AG04449 (cell line): ENCODE measurements at regions of chr17 and their contacts with region 1.

Region 1: DNA sequence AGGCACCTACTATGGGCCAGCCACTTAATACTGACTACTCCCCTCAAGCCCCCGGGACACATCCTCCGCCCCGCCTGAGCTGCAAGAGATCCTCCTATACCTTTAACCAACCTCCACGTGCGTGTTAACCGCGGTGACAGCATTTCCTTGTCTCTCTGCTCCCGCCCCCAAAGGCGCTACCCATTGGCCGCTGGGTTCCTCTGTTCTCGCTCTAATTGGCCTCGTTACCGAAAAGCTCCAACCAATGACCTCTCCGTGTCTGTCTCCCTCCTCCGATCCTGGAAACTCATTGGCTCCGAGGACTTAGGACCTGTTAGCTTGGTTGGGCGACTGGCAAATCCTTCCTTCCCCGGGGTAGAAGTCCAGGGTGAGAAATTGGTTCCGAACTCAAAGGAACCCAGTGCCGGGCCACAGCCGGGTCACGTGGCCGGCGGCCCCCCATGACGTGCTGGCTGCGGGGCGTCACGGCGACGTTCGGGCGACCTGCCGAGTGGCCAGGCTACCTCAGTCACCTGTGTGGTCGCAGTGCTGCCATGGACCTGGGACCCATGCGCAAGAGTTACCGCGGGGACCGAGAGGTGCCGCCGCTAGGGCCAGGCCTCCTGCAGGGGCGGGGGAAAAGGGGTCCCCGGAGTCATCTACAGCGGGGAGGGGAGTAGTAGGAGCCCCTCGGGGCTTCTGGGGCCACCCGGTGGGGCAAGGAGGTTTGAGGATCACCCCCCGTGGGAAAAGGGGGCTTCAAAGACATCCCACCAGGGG is at the start of gene PNPO:
- DNase-seq: peak; percentile 86
- H3K4me3 ChIP-seq: peak within 1 kb of the TSS; percentile 78
- CTCF ChIP-seq: peak; percentile 10

Region 2: DNA sequence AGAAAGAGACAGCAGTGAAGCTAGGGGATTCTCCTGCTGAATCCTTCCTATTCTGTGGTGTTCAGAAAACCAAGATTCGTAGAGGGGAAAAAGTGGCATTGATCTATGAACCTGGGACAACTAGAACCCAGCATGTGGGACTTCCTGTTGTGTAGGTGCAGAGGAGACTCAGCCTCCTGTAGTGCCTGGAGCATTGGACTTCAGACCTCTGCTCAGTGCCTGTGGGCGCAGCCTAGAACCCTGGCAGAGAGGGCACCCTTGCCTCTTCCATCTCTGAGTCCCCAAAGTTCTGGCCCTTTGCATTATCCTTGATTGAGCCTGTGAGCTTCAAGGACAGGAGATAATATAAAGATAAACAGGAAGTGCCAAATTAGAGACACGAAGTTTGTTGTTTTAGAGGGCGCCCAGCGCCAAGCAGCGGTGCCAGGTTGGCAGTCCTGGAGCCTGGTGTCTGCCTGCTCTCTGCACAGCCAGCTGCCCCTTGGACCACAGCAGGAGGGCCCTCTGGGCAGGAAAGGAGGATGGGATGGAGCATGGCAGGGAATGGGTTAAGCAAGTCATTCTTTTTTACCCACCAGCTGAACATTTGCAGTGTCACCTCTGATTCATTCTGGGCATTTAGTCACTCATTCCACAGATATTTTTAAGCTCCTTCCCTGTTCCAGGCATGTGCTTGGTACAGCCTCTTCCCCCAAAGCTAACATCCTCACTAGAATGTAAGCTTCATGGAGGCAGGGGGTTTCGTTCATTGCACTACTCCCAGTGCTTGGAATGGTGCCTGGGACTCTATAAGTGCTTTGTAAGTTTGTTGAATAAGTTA is 78.6 kb before region 1 on chr17:
- CTCF ChIA-PET with region 1: no interaction called
- POLR2A ChIA-PET with region 1: no interaction called
- DNase-seq: peak; percentile 50
- H3K4me3 ChIP-seq: no peak overlapping the region
- CTCF ChIP-seq: no peak

Region 3: GRCh38 chr17:47929218-47930000 is 12.0 kb before region 1 on chr17:
- CTCF ChIA-PET with region 1: interaction called, 38 read pairs
- POLR2A ChIA-PET with region 1: no interaction called
- DNase-seq: no peak
- H3K4me3 ChIP-seq: no peak overlapping the region
- CTCF ChIP-seq: no peak

Region 4: GRCh38 chr17:48011405-48012150 is 70.2 kb after region 1 on chr17:
- CTCF ChIA-PET with region 1: interaction called, 444 read pairs
- POLR2A ChIA-PET with region 1: no interaction called
- DNase-seq: no peak
- H3K4me3 ChIP-seq: peak overlapping the region; percentile 54
- CTCF ChIP-seq: peak; percentile 68

Region 5: DNA sequence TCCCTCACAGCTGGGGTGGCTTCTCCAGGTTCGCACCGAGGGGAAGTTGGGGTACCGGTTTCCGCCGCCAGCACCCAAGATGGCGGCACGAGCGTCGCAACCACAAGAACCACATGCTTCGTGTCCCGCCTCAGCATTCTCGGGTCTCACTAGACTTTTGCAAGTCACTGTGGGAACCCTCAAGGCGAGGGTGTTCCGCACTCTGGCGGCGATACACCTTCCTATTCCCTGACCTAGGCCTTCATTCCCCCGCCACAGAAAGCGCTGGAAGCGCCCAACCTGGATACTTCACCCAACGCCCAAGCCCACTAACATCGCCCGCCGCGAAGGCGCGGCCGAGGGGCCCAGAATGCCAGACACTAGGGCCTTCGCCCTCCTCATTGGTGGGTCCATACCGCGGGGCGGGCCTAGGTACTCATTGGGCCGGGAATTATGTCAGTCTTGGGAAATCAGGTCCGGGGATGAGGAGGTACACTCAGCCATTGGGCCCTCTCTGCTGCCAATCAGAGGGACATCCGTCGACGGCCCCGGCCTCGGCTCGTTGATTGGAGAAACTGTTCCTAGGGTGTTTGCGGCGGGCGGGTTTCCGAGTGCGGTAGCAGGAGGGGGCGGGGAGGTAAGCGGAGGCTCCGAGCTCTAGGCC is 106.4 kb after region 1 on chr17 and contains the start of gene NFE2L1:
- CTCF ChIA-PET with region 1: no interaction called
- POLR2A ChIA-PET with region 1: no interaction called
- DNase-seq: peak; percentile 98
- H3K4me3 ChIP-seq: peak within 1 kb of the TSS; percentile 93
- CTCF ChIP-seq: no peak

Region 6: DNA sequence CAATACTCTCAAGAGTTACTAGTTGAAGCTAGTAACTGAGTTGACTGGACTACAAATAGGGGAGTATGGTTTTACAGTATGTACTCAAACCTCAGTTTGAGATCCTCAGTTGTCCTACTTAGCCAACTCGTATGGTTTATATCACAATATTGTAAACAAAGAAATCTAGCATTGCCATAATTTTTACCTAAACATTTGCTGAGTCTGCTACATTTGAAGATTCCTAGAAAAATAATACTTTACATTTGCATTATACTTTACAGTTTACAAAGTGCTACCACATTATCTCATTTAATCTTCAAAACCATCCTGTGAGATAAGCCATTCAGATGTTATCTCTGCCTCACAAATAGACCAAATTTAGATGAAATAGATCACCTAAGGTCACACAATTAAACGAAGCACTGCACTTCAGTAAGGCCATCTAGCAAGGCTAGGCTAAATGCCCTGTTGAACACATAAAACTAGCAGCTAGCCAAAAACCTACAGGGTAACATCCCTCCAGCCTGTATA is 143.6 kb after region 1 on chr17:
- CTCF ChIA-PET with region 1: no interaction called
- POLR2A ChIA-PET with region 1: no interaction called
- DNase-seq: no peak
- H3K4me3 ChIP-seq: no peak overlapping the region
- CTCF ChIP-seq: no peak

Region 7: GRCh38 chr17:48113201-48113676 is 171.8 kb after region 1 on chr17:
- CTCF ChIA-PET with region 1: no interaction called
- POLR2A ChIA-PET with region 1: no interaction called
- DNase-seq: no peak
- H3K4me3 ChIP-seq: no peak overlapping the region
- CTCF ChIP-seq: no peak